ENCODE measurements at regions of chr6 and their contacts with region 1.

Region 1: GRCh38 chr6:150301846-150302519 is 66.8 kb upstream of the IYD start:
- DNase-seq: peak; percentile 67
- H3K4me3 Mint-ChIP-seq: no peak overlapping the region
- H3K27ac Mint-ChIP-seq: peak overlapping the region; percentile 14
- H3K4me1 Mint-ChIP-seq: peaks cover 20% of the 10 kb centered on the region
- H3K27me3 Mint-ChIP-seq: no peaks in the 10 kb centered on the region
- CTCF ChIP-seq: no peak

Region 2: DNA sequence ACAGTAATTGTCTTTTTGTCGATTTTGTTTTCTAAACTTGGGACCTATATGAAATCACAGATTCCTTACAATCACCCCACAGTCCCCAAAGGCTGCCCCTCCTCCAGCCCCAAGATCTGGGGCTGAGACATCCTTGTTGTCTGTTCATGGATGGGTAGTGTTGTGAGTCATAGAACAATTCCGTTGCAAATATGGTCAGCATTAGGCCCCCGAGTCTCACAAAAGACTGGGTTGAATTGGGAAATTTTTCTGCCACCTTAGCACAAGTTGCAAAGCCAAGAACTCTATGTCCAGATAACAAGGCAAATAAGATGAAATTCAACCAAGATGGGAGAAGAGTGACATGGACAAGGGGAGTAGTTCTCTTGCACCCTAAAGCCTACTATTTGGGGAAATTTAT is 995.0 kb before region 1 on chr6:
- CTCF ChIA-PET with region 1: no interaction called
- POLR2A ChIA-PET with region 1: no interaction called
- intact Hi-C with region 1: no loop called
- DNase-seq: peak; percentile 52
- H3K4me3 Mint-ChIP-seq: no peak overlapping the region
- H3K27ac Mint-ChIP-seq: no peak overlapping the region
- H3K4me1 Mint-ChIP-seq: peaks cover 5% of the 10 kb centered on the region
- H3K27me3 Mint-ChIP-seq: no peaks in the 10 kb centered on the region
- CTCF ChIP-seq: no peak

Region 3: DNA sequence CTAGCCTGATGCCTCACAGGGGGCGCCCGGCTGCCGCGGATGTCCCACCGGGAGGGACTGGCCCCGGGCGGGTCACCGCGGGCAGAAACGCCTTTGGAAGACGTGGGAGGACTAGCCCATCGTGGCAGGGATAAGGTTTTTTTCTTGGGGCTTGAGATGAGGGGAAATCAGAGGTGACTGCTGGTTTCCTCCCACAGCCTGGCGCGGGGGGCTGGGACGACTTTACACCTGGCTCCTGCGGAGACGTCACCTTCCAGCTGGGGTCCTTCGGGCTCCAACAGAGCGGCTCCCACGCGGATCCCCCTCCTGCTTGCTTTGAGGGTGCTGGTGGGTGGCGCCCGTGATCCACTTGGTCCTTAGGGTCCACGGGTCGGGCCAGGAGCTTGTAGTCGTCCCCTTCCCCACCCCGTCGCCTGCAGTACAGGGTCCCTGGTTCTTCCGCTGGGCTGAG is 244.5 kb before region 1 on chr6:
- CTCF ChIA-PET with region 1: no interaction called
- POLR2A ChIA-PET with region 1: no interaction called
- intact Hi-C with region 1: no loop called
- DNase-seq: no peak
- H3K4me3 Mint-ChIP-seq: no peak overlapping the region
- H3K27ac Mint-ChIP-seq: no peak overlapping the region
- H3K4me1 Mint-ChIP-seq: no peaks in the 10 kb centered on the region
- H3K27me3 Mint-ChIP-seq: peaks cover 53% of the 10 kb centered on the region
- CTCF ChIP-seq: no peak

Region 4: DNA sequence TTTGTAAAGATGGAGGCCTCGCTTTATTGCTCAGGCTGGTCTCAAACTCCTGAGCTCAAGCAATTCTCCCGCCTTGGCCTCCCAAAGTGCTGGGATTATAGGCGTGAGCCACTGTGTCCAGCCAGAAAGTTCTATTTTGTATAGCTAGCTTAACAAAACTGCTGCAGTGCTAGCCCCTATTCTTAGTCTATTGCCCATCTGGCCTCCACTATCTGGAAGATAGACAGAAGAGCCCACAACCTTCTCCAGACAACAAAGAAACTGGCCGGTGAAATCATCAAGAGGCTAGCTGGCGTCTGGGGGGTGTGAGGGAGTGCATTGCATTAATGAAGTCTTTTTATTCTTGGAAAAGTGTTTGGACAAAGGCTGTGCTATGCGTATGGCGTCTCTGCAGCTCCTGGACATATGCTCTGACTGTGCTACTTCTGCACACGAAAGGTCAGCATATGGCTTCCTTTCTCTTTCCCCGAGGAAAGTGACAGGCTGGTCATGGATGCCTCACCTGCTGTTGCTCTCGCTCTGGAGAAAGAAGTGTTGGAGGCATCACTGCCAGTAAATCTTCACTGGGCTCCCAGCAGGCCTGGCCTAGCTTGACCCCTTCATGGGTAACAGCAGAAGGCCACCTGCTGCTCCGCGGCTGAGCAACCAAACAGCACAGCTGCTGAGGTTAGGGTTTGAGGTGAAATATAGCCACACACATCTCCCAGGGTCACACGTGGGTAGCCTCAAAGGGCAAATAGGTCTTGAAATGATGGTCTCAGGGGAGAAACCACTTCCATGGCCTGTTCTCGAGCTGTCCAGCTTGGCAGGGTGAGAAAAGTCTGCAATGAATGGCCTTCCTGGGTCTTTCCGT is 28.3 kb before region 1 on chr6:
- CTCF ChIA-PET with region 1: interaction called, 4 read pairs
- POLR2A ChIA-PET with region 1: interaction called, 80 read pairs
- intact Hi-C with region 1: no loop called
- DNase-seq: no peak
- H3K4me3 Mint-ChIP-seq: no peak overlapping the region
- H3K27ac Mint-ChIP-seq: no peak overlapping the region
- H3K4me1 Mint-ChIP-seq: peaks cover 35% of the 10 kb centered on the region
- H3K27me3 Mint-ChIP-seq: no peaks in the 10 kb centered on the region
- CTCF ChIP-seq: no peak

Region 5: GRCh38 chr6:150334790-150335783 is 33.1 kb after region 1 on chr6:
- CTCF ChIA-PET with region 1: interaction called, 3 read pairs
- POLR2A ChIA-PET with region 1: no interaction called
- intact Hi-C with region 1: loop called (anchors 2 kb)
- DNase-seq: peak; percentile 76
- H3K4me3 Mint-ChIP-seq: no peak overlapping the region
- H3K27ac Mint-ChIP-seq: peak overlapping the region; percentile 4
- H3K4me1 Mint-ChIP-seq: peaks cover 18% of the 10 kb centered on the region
- H3K27me3 Mint-ChIP-seq: no peaks in the 10 kb centered on the region
- CTCF ChIP-seq: peak; percentile 82

Region 6: DNA sequence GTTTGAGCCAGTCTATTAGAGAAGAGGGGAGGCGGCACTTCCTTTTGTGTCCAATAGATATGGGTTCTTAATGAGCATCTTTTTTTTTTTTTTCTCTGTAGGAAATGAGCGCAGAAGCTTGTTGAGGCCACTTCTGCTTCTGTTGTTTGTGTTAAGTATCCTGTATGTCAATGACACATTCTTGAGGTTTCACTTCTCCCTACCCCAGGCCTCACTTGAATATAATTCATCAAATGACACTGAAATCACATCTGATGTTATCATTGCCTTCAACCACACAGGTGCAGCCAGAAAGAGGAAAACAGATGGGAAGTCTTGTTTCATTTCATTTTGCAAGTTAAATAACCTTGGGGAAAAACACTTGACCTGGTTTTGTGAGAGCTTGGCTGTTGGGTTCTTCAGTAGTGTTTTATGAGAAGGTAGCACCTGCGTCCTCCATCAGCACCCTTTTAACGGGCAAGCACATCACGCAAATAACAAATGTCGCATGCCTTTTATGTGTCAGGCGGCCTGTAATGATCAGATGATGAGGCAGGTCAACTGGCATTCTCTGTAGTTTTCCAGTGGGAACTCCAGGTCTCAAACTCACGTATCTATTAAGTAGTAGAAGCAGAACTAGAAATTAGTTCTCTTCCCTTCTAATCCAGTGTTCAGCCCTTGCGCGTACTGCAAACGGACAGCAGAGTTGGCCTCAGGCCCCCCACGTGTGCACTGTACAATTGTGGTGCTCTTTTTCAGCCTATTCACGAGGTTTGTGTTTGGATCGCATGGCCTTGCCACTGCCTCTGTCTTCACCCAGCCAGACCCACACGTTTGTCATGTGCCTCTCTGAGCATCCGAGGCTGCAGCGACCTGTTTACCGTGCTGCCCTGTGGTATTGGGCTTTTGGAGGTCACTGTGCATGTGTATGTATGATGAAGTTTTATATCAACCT is 321.2 kb after region 1 on chr6:
- CTCF ChIA-PET with region 1: no interaction called
- POLR2A ChIA-PET with region 1: no interaction called
- intact Hi-C with region 1: no loop called
- DNase-seq: no peak
- H3K4me3 Mint-ChIP-seq: no peak overlapping the region
- H3K27ac Mint-ChIP-seq: no peak overlapping the region
- H3K4me1 Mint-ChIP-seq: no peaks in the 10 kb centered on the region
- H3K27me3 Mint-ChIP-seq: no peaks in the 10 kb centered on the region
- CTCF ChIP-seq: no peak

Measured in MCF 10A (cell line).